ENCODE measurements at regions of chr3 and their contacts with region 1.

Region 1: DNA sequence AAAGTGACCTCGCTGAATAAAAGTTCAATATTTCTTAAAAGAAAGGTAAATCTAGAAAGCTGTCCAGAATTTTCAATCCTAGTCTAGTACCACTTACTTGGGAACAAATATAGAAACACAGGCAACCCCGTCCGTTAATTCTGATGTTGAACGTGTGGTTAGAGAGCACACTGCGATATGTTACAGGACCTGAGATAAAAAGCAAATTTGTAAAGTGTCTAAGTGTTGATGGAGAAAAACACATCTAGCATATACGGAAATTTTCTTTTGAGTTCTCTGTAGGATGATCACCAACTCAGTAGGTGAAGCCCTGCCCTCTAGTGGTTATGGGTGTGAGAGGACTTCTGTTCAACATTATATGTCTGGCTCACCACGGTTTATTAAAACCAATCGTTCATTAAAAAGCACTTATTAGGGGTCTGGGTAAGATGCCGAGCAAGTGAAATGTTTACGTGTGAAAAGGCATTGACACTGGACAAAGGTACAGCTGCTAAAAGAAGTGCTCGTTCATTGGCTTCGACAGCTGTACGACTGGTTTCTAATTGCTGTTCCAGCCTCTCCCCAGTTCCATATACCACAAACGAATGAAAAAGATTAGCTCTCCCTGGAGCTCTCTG is 1.0 kb upstream of the ATP2C1 start:
- DNase-seq: peak; percentile 65 to 83 (median 77)
- H3K4me3 ChIP-seq: peak overlapping the region; percentile 62 to 92 (median 84)
- H3K4me3 Mint-ChIP-seq: peak overlapping the region; percentile 89 to 98
- H3K27ac ChIP-seq: peak overlapping the region; percentile 84 to 99
- H3K27ac Mint-ChIP-seq: peak overlapping the region; percentile 98 to 100 (median 99)
- H3K4me1 ChIP-seq: peaks cover 13 to 16% of the 10 kb centered on the region in 2 donors
- H3K4me1 Mint-ChIP-seq: peaks cover 26% of the 10 kb centered on the region
- H3K27me3 ChIP-seq: no peaks in the 10 kb centered on the region
- H3K27me3 Mint-ChIP-seq: peaks cover 0 to 3% (median 0%) of the 10 kb centered on the region in 3 donors
- CTCF ChIP-seq: peak; percentile 89

Region 2: DNA sequence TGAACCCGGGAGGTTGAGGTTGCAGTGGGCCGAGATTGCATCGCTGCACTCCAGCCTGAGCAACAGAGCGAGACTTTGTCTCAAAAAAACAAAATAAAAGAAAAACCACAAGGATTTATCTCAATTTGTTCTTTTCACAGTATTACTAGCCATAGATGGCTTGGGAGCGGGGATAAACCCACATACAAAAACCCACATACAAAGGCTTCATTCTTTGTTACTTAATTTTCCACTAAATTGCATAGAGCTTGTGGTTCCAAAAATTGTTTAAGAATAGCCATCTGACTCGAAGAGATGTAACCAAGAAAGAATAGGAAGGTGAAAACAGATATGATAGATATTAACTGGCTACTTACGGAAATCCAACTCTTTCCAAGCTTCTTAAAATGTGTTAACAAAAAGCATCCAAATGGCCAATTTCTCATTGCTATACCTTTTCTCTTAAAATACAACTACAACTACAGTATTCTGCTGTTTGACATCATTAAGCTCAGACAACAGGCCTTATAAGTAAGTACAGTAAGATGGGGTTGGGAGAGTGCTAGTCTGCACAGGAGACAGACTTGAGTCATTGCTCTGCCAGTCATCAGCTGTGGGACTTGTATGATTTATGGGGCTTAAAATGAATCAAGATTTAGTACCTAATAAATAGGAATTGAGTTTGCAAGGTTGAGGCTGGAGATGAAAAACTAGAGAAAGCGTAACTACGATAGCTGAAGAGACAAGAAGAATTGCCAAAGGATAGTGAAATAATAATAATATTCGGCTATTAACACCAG is 1189.7 kb before region 1 on chr3:
- intact Hi-C with region 1: no loop called
- DNase-seq: no peak
- H3K4me3 ChIP-seq: no peak overlapping the region
- H3K4me3 Mint-ChIP-seq: no peak overlapping the region
- H3K27ac ChIP-seq: no peak overlapping the region
- H3K27ac Mint-ChIP-seq: peak overlapping the region in 1 of 7 donors; percentile 2
- H3K4me1 ChIP-seq: no peaks in the 10 kb centered on the region
- H3K4me1 Mint-ChIP-seq: peaks cover 2% of the 10 kb centered on the region
- H3K27me3 ChIP-seq: no peaks in the 10 kb centered on the region
- H3K27me3 Mint-ChIP-seq: peaks cover 0 to 2% (median 0%) of the 10 kb centered on the region in 3 donors
- CTCF ChIP-seq: no peak

Region 3: DNA sequence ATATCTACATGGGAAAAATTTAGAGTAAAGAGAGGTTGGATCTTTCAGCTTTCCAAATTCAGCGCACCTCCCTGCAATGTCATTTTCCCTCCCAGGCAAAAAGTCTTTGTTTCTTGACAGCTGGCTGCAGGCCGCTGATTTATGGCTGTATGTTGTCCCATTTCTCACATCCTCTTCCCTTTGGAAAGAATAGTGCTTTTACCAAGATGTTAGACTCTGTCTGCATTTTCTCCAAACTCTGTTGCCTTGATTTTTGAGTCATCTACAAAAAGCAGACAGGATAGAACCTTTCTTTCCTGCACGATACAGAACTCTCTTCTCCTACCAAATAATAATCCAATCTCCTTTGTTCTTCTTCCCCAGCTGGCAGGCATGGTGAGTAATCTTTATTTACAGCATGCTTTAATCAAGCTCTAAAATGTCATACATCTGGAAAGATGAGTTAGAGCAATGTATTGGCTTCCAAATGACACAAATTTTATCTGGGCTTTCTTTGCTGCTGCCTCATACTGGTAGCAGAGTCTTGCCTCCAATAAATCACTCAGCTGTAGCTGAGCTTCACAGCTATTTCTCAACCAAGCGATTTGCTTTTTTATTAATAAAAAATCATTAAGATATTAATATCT is 248.1 kb before region 1 on chr3:
- intact Hi-C with region 1: no loop called
- DNase-seq: no peak
- H3K4me3 ChIP-seq: no peak overlapping the region
- H3K4me3 Mint-ChIP-seq: no peak overlapping the region
- H3K27ac ChIP-seq: no peak overlapping the region
- H3K27ac Mint-ChIP-seq: no peak overlapping the region
- H3K4me1 ChIP-seq: no peaks in the 10 kb centered on the region
- H3K4me1 Mint-ChIP-seq: no peaks in the 10 kb centered on the region
- H3K27me3 ChIP-seq: no peaks in the 10 kb centered on the region
- H3K27me3 Mint-ChIP-seq: peaks cover 0 to 3% (median 2%) of the 10 kb centered on the region in 3 donors
- CTCF ChIP-seq: no peak

Region 4: GRCh38 chr3:130746246-130747039 is 146.4 kb before region 1 on chr3 and contains the start of gene PIK3R4:
- intact Hi-C with region 1: loop called in 1 of 2 experiments (anchors 5 kb)
- DNase-seq: peak; percentile 98 to 99 (median 98)
- H3K4me3 ChIP-seq: peak within 1 kb of the TSS; percentile 86 to 90 (median 87)
- H3K4me3 Mint-ChIP-seq: peak within 1 kb of the TSS; percentile 92 to 96
- H3K27ac ChIP-seq: peak within 1 kb of the TSS; percentile 82 to 97
- H3K27ac Mint-ChIP-seq: peak within 1 kb of the TSS; percentile 96 to 99 (median 97)
- H3K4me1 ChIP-seq: peaks cover 11 to 14% of the 10 kb centered on the region in 2 donors
- H3K4me1 Mint-ChIP-seq: peaks cover 40% of the 10 kb centered on the region
- H3K27me3 ChIP-seq: no peaks in the 10 kb centered on the region
- H3K27me3 Mint-ChIP-seq: peaks cover 0 to 2% (median 0%) of the 10 kb centered on the region in 3 donors
- CTCF ChIP-seq: no peak
- polyA plus RNA-seq, gene PIK3R4: 6.5 to 18.7 (median 10.1) TPM

Region 5: DNA sequence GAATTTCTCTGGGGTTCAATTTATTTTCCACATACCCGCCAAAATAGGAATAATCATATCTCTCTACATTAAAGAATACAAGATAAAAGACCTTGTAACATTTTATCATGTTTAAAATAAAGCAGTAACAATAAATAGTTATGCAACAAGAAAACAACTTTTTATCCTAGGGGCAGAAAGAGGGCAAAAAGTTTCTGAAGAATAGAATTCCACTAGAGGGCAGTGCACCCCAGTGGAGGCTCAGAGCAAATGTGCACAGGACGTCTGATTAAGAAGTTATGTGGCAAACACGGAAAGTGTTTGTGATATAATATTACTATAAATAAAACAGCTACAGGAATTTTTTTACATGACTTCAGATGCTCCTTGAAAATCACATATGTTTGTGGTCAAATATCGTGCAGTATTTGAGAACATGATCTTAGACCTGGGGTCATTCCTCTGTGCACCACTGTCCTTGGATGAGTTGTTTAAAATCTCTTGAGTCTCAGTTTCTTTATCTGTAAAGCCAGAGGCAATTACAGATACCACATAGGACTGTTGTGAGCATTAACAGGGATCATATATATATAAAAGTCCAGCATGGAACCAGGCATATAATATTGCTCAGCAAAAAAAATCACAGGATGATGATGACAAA is 133.0 kb before region 1 on chr3:
- intact Hi-C with region 1: loop called (anchors 5 kb)
- DNase-seq: peak; percentile 44 to 59 (median 57)
- H3K4me3 ChIP-seq: no peak overlapping the region
- H3K4me3 Mint-ChIP-seq: no peak overlapping the region
- H3K27ac ChIP-seq: no peak overlapping the region
- H3K27ac Mint-ChIP-seq: no peak overlapping the region
- H3K4me1 ChIP-seq: no peaks in the 10 kb centered on the region
- H3K4me1 Mint-ChIP-seq: no peaks in the 10 kb centered on the region
- H3K27me3 ChIP-seq: no peaks in the 10 kb centered on the region
- H3K27me3 Mint-ChIP-seq: peaks cover 0 to 2% (median 0%) of the 10 kb centered on the region in 3 donors
- CTCF ChIP-seq: peak; percentile 78

Region 6: DNA sequence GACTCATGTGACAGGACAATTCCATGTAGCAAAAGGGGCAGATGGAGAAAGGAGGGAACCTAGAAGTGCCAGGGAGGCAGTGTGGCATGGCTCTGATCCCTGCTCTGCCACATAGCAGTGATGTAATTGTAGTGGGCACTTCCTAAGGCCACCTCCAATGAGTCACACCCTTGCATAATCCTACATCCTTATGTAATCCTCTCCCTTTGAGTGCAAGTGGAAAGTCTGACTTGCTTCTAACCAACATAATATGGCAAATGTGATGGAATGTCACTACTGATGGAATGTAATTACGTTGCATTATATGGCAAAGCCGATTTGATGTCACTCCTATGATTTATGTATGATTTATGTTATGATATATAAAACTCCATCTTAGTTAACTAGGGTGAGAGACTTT is 71.9 kb before region 1 on chr3:
- intact Hi-C with region 1: loop called in 1 of 2 experiments (anchors 5 kb)
- DNase-seq: peak; percentile 82 to 95 (median 90)
- H3K4me3 ChIP-seq: no peak overlapping the region
- H3K4me3 Mint-ChIP-seq: no peak overlapping the region
- H3K27ac ChIP-seq: no peak overlapping the region
- H3K27ac Mint-ChIP-seq: peak overlapping the region in 3 of 7 donors; percentile 1 to 42 (median 25)
- H3K4me1 ChIP-seq: peaks cover 9 to 22% of the 10 kb centered on the region in 2 donors
- H3K4me1 Mint-ChIP-seq: peaks cover 23% of the 10 kb centered on the region
- H3K27me3 ChIP-seq: no peaks in the 10 kb centered on the region
- H3K27me3 Mint-ChIP-seq: peaks cover 0 to 4% (median 0%) of the 10 kb centered on the region in 3 donors
- CTCF ChIP-seq: no peak

Region 7: DNA sequence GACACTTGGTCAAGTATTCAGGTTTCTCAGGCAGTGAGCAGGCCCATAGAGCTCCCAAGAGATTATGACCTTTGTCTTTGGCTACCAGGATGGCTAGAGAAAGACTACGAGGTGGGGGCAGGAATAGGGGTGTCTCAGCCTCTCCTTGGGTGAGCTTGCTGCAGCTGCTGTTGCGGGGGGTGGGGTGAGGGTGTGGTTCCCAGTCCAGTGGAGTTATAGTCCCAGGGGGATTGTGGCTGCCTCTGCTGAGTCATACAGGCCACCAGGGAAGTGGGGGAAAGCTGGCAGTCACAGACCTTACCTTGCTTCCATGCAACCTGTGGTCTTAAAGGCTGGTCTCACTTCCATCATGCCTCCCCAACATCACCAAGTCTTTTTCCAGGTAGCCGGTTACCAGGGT is 32.8 kb after region 1 on chr3:
- intact Hi-C with region 1: no loop called
- DNase-seq: no peak
- H3K4me3 ChIP-seq: no peak overlapping the region
- H3K4me3 Mint-ChIP-seq: no peak overlapping the region
- H3K27ac ChIP-seq: no peak overlapping the region
- H3K27ac Mint-ChIP-seq: peak overlapping the region in 2 of 7 donors; percentile 50 to 54
- H3K4me1 ChIP-seq: no peaks in the 10 kb centered on the region
- H3K4me1 Mint-ChIP-seq: peaks cover 8% of the 10 kb centered on the region
- H3K27me3 ChIP-seq: no peaks in the 10 kb centered on the region
- H3K27me3 Mint-ChIP-seq: peaks cover 0 to 3% (median 0%) of the 10 kb centered on the region in 3 donors
- CTCF ChIP-seq: no peak

Region 8: DNA sequence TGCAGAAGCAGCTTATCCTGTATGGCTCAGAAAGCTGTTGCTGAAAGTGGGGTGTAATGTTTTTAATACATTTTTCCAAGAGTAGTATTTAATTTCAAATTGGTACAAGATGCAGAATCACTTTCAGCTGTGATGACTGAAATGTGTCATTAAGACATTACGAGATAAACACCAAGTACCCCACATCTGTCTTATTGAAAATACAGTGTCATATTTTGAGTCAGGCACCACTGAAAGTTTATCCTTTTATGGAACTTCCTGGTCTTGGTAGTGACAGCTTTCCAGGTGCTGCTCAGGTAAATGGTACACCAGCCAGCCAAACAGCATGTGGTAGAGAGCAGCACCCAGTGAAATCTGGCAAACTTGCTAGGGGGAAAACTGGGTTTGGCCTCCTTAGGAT is 116.8 kb after region 1 on chr3:
- intact Hi-C with region 1: loop called in 1 of 2 experiments (anchors 10 kb)
- DNase-seq: no peak
- H3K4me3 ChIP-seq: no peak overlapping the region
- H3K4me3 Mint-ChIP-seq: no peak overlapping the region
- H3K27ac ChIP-seq: no peak overlapping the region
- H3K27ac Mint-ChIP-seq: no peak overlapping the region
- H3K4me1 ChIP-seq: no peaks in the 10 kb centered on the region
- H3K4me1 Mint-ChIP-seq: peaks cover 6% of the 10 kb centered on the region
- H3K27me3 ChIP-seq: no peaks in the 10 kb centered on the region
- H3K27me3 Mint-ChIP-seq: no peaks in the 10 kb centered on the region
- CTCF ChIP-seq: no peak

Region 9: GRCh38 chr3:131178710-131179375 is 286.0 kb after region 1 on chr3:
- intact Hi-C with region 1: no loop called
- DNase-seq: no peak
- H3K4me3 ChIP-seq: no peak overlapping the region
- H3K4me3 Mint-ChIP-seq: no peak overlapping the region
- H3K27ac ChIP-seq: no peak overlapping the region
- H3K27ac Mint-ChIP-seq: no peak overlapping the region
- H3K4me1 ChIP-seq: no peaks in the 10 kb centered on the region
- H3K4me1 Mint-ChIP-seq: peaks cover 14% of the 10 kb centered on the region
- H3K27me3 ChIP-seq: no peaks in the 10 kb centered on the region
- H3K27me3 Mint-ChIP-seq: no peaks in the 10 kb centered on the region
- CTCF ChIP-seq: no peak

Measured in CD14-positive monocyte (primary cell).